Dendritic cell treated with granulocyte-macrophage colony-stimulating factor and Interleukin-4, amounts not matched to agents 40 ng/mL and 50 ng/mL, for 4 days (primary cell): ENCODE measurements at regions of chr11 and their contacts with region 1.

Region 1: GRCh38 chr11:83292709-83293456 is 6.7 kb upstream of the CCDC90B start:
- H3K4me3 Mint-ChIP-seq: no peak overlapping the region
- H3K27ac Mint-ChIP-seq: no peak overlapping the region
- H3K4me1 Mint-ChIP-seq: peaks cover 13% of the 10 kb centered on the region
- H3K27me3 Mint-ChIP-seq: peaks cover 4% of the 10 kb centered on the region

Region 2: GRCh38 chr11:83724008-83724461 is 431.2 kb after region 1 on chr11:
- intact Hi-C with region 1: loop called (anchors 10 kb)
- H3K4me3 Mint-ChIP-seq: no peak overlapping the region
- H3K27ac Mint-ChIP-seq: no peak overlapping the region
- H3K4me1 Mint-ChIP-seq: no peaks in the 10 kb centered on the region
- H3K27me3 Mint-ChIP-seq: peaks cover 6% of the 10 kb centered on the region